ENCODE measurements at regions of chr19 and their contacts with region 1.

Region 1: DNA sequence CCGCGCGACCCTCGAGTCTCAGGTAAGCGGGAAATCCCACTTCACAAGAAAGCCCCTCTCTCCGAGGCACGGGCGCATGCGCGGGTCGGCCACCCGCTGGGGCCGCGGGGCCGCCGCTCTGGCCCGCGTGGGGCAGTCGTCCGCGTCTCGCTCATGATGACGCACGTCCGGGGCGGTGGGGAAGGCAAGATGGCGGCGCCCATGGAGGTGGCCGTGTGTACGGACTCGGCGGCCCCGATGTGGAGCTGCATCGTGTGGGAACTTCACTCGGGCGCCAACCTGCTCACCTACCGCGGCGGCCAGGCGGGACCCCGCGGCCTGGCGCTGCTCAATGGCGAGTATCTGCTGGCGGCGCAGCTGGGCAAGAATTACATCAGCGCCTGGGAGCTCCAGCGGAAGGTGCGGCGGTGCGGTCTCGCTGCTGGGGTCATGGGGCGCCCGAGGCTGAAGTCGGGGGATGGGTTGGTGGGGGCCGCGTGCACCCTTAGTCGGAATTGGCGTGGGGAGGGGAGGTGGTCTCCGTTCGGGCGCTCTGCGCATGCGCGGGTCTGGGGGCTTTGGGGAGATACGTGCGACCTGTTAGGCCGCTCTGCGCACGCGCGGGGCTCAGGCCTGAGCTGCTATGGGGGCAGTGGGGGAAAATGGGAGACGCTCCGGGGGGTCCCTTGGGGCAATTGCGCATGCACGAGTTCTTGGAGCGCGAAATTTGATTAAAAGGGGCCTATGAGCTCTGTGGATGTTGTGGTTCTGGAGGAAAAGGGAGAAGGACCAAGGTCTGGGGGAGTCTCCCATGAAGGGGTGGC is at the start of gene WDR18:
- DNase-seq: peak; percentile 89
- ATAC-seq: peak; percentile 89
- H3K4me3 Mint-ChIP-seq: peak within 1 kb of the TSS; percentile 92
- H3K27ac Mint-ChIP-seq: peak within 1 kb of the TSS; percentile 89
- H3K4me1 Mint-ChIP-seq: peaks cover 18% of the 10 kb centered on the region
- H3K27me3 Mint-ChIP-seq: no peaks in the 10 kb centered on the region
- CTCF ChIP-seq: no peak
- total RNA-seq, gene WDR18: 66.5 and 84.7 TPM in 2 replicates

Region 2: DNA sequence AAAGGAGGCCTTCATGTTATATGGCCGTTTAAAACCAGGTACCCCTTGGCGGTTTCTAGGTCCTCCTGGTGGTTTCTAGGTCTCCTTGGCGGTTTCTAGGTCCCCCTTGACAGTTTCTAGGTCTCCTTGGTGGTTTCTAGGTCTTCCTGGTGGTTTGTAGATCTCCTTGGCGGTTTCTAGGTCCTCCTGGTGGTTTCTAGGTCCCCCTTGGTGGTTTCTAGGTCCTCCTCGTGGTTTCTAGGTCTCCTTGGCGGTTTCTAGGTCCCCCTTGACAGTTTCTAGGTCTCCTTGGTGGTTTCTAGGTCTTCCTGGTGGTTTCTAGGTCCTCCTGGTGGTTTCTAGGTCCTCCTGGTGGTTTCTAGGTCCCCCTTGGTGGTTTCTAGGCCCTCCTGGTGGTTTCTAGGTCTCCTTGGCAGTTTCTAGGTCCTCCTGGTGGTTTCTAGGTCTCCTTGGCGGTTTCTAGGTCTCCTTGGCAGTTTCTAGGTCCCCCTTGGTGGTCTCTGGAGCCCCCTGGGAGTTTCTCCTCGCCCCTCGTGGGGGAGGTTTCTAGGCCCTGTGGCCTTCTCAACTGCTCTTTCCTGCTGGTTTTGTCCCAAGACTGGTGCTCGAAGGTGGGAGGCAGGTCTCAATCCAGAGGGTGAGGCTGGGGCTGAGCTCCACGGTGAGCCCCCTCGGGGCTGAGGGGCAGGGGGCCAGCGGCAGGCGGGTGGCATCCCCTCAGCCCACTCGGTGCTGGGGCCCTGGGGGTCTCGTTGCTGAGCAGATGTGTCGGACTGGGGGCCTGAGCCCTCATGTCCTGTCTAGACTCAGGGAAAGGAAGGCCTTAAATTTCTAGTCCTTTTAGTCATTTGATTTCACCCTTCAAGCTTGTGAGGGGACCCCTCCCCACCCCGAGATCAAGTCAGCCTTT is 386.7 kb before region 1 on chr19:
- CTCF ChIA-PET with region 1: no interaction called
- POLR2A ChIA-PET with region 1: no interaction called
- intact Hi-C with region 1: no loop called
- DNase-seq: no peak
- ATAC-seq: no peak
- H3K4me3 Mint-ChIP-seq: no peak overlapping the region
- H3K27ac Mint-ChIP-seq: no peak overlapping the region
- H3K4me1 Mint-ChIP-seq: peaks cover 3% of the 10 kb centered on the region
- H3K27me3 Mint-ChIP-seq: peaks cover 6% of the 10 kb centered on the region
- CTCF ChIP-seq: no peak

Region 3: GRCh38 chr19:913080-913748 is 71.2 kb before region 1 on chr19 and contains the start of gene R3HDM4:
- CTCF ChIA-PET with region 1: no interaction called
- POLR2A ChIA-PET with region 1: interaction called, 10 read pairs
- intact Hi-C with region 1: no loop called
- DNase-seq: peak; percentile 85
- ATAC-seq: peak; percentile 50
- H3K4me3 Mint-ChIP-seq: peak within 1 kb of the TSS; percentile 89
- H3K27ac Mint-ChIP-seq: peak within 1 kb of the TSS; percentile 86
- H3K4me1 Mint-ChIP-seq: peaks cover 36% of the 10 kb centered on the region
- H3K27me3 Mint-ChIP-seq: no peaks in the 10 kb centered on the region
- CTCF ChIP-seq: no peak
- total RNA-seq, gene R3HDM4: 174 and 189 TPM in 2 replicates

Region 4: DNA sequence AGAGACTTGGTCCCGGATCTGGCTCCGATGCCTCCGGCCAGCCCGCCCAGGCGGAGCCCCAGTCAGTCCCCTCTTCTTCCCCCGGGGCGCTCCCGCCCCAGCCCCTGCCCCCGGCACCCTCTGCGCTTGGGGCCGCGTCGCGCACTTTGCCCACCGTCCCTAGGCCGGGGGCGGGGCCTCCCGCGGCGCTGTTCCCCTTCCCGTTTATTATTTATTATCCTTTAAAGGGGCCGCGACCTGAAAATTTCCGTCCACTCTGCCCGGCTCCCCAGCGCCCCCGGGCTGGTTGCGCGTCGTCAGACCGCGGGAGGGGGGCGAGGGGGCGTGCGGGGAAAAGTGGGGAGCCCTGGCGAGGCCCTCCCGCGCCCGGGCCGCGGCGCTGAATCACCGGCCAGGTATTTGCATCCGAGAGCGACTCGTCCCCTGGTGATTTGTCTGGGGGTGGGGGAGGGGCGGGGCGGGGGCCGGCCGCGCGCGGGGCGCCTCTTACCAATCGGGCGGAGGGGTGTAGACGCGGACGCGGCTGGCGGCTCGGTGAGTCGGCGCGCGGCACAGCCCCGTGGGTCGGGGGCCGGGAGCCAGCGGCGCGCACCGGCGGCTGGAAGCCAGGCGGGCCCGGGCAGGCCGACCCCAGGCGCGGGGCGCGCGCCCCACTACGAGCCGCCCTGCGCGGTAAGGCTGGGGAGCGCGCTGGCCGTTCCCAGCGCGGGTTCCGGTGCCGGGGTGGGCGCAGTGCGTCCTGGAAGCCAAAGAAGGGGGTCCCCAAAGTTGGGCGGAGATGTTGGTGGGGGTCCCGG is 58.6 kb before region 1 on chr19 and contains the start of gene ARID3A:
- CTCF ChIA-PET with region 1: interaction called, 37 read pairs
- POLR2A ChIA-PET with region 1: interaction called, 67 read pairs
- intact Hi-C with region 1: loop called (anchors 1 kb)
- DNase-seq: peak; percentile 84
- ATAC-seq: peak; percentile 66
- H3K4me3 Mint-ChIP-seq: peak within 1 kb of the TSS; percentile 86
- H3K27ac Mint-ChIP-seq: peak within 1 kb of the TSS; percentile 82
- H3K4me1 Mint-ChIP-seq: peaks cover 22% of the 10 kb centered on the region
- H3K27me3 Mint-ChIP-seq: no peaks in the 10 kb centered on the region
- CTCF ChIP-seq: no peak
- total RNA-seq, gene ARID3A: 67.7 and 74.9 TPM in 2 replicates

Region 5: DNA sequence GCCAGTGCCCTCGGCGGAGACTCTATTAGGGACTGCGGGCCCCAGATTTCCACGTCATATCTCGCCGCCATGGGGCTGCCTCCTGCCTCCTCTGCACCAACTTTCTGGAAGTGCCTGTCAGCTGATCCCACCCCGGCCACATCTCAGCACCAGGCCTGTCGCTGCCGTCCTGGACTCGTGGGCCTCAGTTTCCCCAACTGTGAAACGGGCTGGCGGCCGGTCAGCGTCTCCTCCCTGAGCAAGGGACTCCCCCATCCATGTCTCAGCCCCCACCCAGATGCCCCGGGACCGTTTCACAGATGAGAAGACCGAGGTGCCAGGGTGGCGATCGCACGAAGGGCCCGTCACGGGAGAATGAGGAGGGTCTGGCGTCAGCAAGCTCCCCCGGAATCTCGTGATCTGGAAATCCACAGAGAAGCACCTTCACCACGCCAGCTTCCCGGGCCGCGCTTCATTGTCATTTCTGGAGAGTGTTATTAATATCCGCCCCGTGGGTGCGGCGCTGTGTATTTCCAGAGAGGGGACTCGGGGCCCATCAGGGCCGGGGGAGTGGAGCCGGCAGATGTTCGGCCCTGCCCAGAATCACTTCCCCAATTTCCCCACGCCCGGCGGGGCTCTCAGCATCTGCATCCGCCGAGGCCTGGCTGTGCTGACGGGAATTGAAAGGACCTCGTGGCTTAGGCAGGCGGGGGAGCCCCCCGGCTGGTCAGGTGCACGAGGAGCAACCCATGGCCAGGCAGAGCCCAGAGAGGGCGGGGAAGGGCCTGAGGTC is 36.9 kb before region 1 on chr19:
- CTCF ChIA-PET with region 1: interaction called, 4 read pairs
- POLR2A ChIA-PET with region 1: interaction called, 13 read pairs
- intact Hi-C with region 1: loop called (anchors 2 kb)
- DNase-seq: peak; percentile 84
- ATAC-seq: peak; percentile 76
- H3K4me3 Mint-ChIP-seq: peak overlapping the region; percentile 81
- H3K27ac Mint-ChIP-seq: peak overlapping the region; percentile 93
- H3K4me1 Mint-ChIP-seq: peaks cover 57% of the 10 kb centered on the region
- H3K27me3 Mint-ChIP-seq: no peaks in the 10 kb centered on the region
- CTCF ChIP-seq: no peak

Region 6: GRCh38 chr19:1001538-1002166 is 17.3 kb after region 1 on chr19:
- CTCF ChIA-PET with region 1: interaction called, 3 read pairs
- POLR2A ChIA-PET with region 1: interaction called, 21 read pairs
- intact Hi-C with region 1: loop called (anchors 1 kb)
- DNase-seq: peak; percentile 75
- ATAC-seq: peak; percentile 77
- H3K4me3 Mint-ChIP-seq: no peak overlapping the region
- H3K27ac Mint-ChIP-seq: no peak overlapping the region
- H3K4me1 Mint-ChIP-seq: peaks cover 13% of the 10 kb centered on the region
- H3K27me3 Mint-ChIP-seq: peaks cover 29% of the 10 kb centered on the region
- CTCF ChIP-seq: no peak

Region 7: GRCh38 chr19:1241417-1242095 is 257.2 kb after region 1 on chr19 and contains the start of gene ATP5F1D:
- CTCF ChIA-PET with region 1: interaction called, 4 read pairs
- POLR2A ChIA-PET with region 1: interaction called, 4 read pairs
- intact Hi-C with region 1: loop called (anchors 1 kb)
- DNase-seq: peak; percentile 85
- ATAC-seq: peak; percentile 67
- H3K4me3 Mint-ChIP-seq: peak within 1 kb of the TSS; percentile 86
- H3K27ac Mint-ChIP-seq: peak within 1 kb of the TSS; percentile 74
- H3K4me1 Mint-ChIP-seq: peaks cover 53% of the 10 kb centered on the region
- H3K27me3 Mint-ChIP-seq: peaks cover 7% of the 10 kb centered on the region
- CTCF ChIP-seq: no peak
- total RNA-seq, gene ATP5F1D: 172 and 185 TPM in 2 replicates